Heart left ventricle (tissue), 16 donors: ENCODE measurements at regions of chr1 and their contacts with region 1.

Region 1: GRCh38 chr1:160997323-160998038 is 23.5 kb downstream of the F11R start:
- DNase-seq: peak; percentile 66 to 79 (median 70)
- ATAC-seq: peak; percentile 83 to 94 (median 90)
- H3K4me3 ChIP-seq: no peak overlapping the region
- H3K27ac ChIP-seq: peak overlapping the region in 10 of 12 donors; percentile 10 to 76 (median 54)
- H3K4me1 ChIP-seq: peaks cover 0 to 24% (median 6%) of the 10 kb centered on the region in 12 donors
- H3K27me3 ChIP-seq: no peaks in the 10 kb centered on the region
- CTCF ChIP-seq: peak; percentile 46 to 77 (median 62)
- POLR2A ChIP-seq: no peak

Region 2: DNA sequence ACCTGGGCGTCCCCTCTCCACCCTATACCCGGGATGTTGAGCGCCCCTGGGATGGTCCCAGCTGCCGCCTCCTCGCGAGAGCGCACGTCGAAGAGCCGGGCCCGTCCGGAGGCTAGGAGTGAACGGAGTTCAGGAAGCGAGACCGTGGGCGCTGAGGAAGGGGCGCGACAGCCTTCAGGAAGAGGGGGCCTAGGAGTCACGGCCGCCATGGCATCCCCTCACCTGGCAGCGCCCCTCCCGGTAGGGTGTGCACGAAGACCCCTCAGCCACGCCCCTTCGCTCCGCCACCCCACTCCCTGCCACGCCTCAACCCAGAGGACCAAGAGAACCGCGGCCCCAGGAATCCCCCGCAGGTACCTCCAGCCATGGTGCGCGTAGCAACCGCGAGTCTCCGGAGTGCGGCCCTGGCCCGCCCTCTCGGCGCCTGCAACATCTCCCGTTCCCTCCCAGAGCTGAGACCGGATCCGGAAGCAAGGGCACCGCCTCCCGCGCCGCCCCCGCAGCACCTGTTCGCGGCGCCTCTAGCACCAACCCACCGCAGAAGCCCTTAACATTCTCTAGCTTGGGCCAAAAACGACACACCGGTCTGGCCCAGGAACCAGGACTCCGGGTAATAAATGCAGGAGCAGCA is 41.2 kb after region 1 on chr1 and contains the start of gene TSTD1:
- intact Hi-C with region 1: loop called in 7 of 10 experiments (anchors 2 to 10 kb)
- DNase-seq: peak; percentile 58 to 78 (median 62)
- ATAC-seq: peak; percentile 29 to 87 (median 85)
- H3K4me3 ChIP-seq: peak within 1 kb of the TSS; percentile 18 to 71 (median 50)
- H3K27ac ChIP-seq: peak within 1 kb of the TSS in 2 of 12 donors; percentile 46 to 62
- H3K4me1 ChIP-seq: peaks cover 0 to 26% (median 4%) of the 10 kb centered on the region in 12 donors
- H3K27me3 ChIP-seq: no peaks in the 10 kb centered on the region
- CTCF ChIP-seq: no peak
- POLR2A ChIP-seq: no peak
- total RNA-seq, gene TSTD1: 6.1 to 22.7 (median 14.4) TPM

Region 3: GRCh38 chr1:161098210-161099068 is 101.0 kb after region 1 on chr1 and contains the start of gene KLHDC9:
- intact Hi-C with region 1: loop called (anchors 2 to 5 kb)
- DNase-seq: peak; percentile 79 to 88 (median 82)
- ATAC-seq: peak; percentile 80 to 90 (median 84)
- H3K4me3 ChIP-seq: peak within 1 kb of the TSS; percentile 49 to 81 (median 64)
- H3K27ac ChIP-seq: peak within 1 kb of the TSS in 11 of 12 donors; percentile 40 to 83 (median 71)
- H3K4me1 ChIP-seq: peaks cover 2 to 35% (median 17%) of the 10 kb centered on the region in 12 donors
- H3K27me3 ChIP-seq: no peaks in the 10 kb centered on the region
- CTCF ChIP-seq: peak in 1 of 12 donors; percentile 15
- POLR2A ChIP-seq: no peak
- total RNA-seq, gene KLHDC9: 2.4 to 13.3 (median 6.1) TPM

Region 4: DNA sequence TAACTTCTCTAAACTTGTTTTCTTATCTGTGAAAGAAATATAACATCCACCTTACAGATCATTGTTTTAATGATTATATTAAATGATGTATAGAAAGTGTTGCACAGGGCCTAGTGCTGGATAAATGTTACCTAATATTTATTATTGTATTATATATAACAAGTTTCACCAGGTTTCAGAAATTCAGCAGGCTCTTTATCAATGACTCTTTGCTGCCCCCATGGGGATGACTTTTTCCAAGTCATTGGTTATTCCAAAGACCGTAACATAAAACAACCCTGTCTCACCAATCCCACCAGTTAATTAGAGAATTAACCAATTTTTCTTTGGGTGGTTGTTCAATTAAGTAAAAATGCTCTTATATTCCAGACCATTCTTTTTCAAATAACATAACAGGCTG is 142.3 kb after region 1 on chr1:
- intact Hi-C with region 1: loop called in 4 of 10 experiments (anchors 5 to 10 kb)
- DNase-seq: peak in 1 of 5 donors; percentile 39
- ATAC-seq: peak in 1 of 4 donors; percentile 49
- H3K4me3 ChIP-seq: no peak overlapping the region
- H3K27ac ChIP-seq: no peak overlapping the region
- H3K4me1 ChIP-seq: peaks cover 0 to 33% (median 0%) of the 10 kb centered on the region in 12 donors
- H3K27me3 ChIP-seq: no peaks in the 10 kb centered on the region
- CTCF ChIP-seq: peak in 11 of 12 donors; percentile 20 to 65 (median 52)
- POLR2A ChIP-seq: no peak